CD14-positive monocyte (primary cell): ENCODE measurements at regions of chr6 and their contacts with region 1.

Region 1: GRCh38 chr6:24666641-24667377 is at the starts of genes ACOT13 and TDP2:
- DNase-seq: peak; percentile 96 to 99 (median 96)
- H3K4me3 ChIP-seq: peak within 1 kb of the TSS; percentile 79 to 99 (median 90)
- H3K4me3 Mint-ChIP-seq: peak within 1 kb of the TSS; percentile 96 to 98
- H3K27ac ChIP-seq: peak within 1 kb of the TSS; percentile 91 to 94
- H3K27ac Mint-ChIP-seq: peak within 1 kb of the TSS; percentile 94 to 99 (median 98)
- H3K4me1 ChIP-seq: peaks cover 21 to 29% of the 10 kb centered on the region in 2 donors
- H3K4me1 Mint-ChIP-seq: peaks cover 40% of the 10 kb centered on the region
- H3K27me3 ChIP-seq: no peaks in the 10 kb centered on the region
- H3K27me3 Mint-ChIP-seq: peaks cover 0 to 2% (median 0%) of the 10 kb centered on the region in 3 donors
- CTCF ChIP-seq: peak; percentile 65
- polyA plus RNA-seq, gene ACOT13: 1.7 to 20.1 (median 14.5) TPM
- polyA plus RNA-seq, gene TDP2: 21.0 to 24.2 (median 21.8) TPM

Region 2: DNA sequence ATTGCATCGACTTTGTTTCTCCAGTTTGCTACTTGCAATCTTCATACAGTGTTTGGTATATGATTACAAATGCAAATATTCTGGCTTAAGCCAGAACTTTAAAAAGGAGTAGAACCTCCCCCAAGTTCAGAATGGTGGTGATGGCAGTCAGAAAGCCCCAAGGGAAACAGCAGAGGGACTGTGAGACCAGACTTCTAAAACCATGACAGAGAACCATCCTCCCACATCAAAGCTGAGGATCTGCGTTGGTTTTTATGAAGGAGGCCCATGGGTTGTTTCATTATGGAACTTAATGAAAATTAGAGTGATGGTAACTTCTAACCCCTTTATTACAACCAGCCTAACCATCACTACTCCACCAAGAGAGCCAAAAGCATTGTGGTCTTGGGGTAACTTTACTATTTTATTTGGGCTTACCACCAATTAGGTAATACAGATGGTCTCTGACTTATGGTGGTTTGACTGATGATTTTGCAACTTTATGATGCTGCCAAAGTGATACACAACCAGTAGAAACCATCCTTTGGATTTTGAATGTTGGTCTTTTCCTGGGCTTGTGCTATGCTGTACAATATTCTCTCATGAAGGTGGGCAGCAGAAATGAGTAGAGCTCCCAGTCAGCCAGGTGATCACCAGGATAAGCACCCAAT is 274.9 kb before region 1 on chr6:
- intact Hi-C with region 1: no loop called
- DNase-seq: no peak
- H3K4me3 ChIP-seq: no peak overlapping the region
- H3K4me3 Mint-ChIP-seq: no peak overlapping the region
- H3K27ac ChIP-seq: no peak overlapping the region
- H3K27ac Mint-ChIP-seq: no peak overlapping the region
- H3K4me1 ChIP-seq: peaks cover 12% of the 10 kb centered on the region in 2 donors
- H3K4me1 Mint-ChIP-seq: peaks cover 12% of the 10 kb centered on the region
- H3K27me3 ChIP-seq: no peaks in the 10 kb centered on the region
- H3K27me3 Mint-ChIP-seq: peaks cover under 1 to 4% (median 2%) of the 10 kb centered on the region in 3 donors
- CTCF ChIP-seq: no peak

Region 3: DNA sequence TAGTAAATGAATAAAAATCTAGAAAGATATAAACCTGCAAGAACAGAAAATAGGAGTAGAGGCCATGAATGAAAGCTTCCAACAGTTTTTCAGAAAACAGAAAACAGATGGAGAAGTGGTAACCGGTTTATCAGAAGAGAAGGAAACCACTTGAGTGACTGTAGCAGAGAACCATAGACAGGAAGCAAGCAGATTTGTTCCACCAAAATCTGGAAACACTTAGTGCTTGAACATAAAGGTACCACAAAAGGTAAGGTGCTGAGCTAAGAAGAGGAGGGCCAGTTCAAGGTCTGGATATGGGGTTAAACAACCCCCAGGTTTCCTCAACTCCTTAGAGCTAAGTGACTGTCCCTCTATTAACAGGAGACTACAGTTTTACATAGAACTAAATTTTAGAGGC is 11.6 kb before region 1 on chr6:
- intact Hi-C with region 1: loop called in 1 of 2 experiments (anchors 1 kb)
- DNase-seq: no peak
- H3K4me3 ChIP-seq: no peak overlapping the region
- H3K4me3 Mint-ChIP-seq: no peak overlapping the region
- H3K27ac ChIP-seq: peak overlapping the region in 1 of 2 donors; percentile 44
- H3K27ac Mint-ChIP-seq: peak overlapping the region in 3 of 7 donors; percentile 13 to 28 (median 28)
- H3K4me1 ChIP-seq: peaks cover 18 to 23% of the 10 kb centered on the region in 2 donors
- H3K4me1 Mint-ChIP-seq: peaks cover 21% of the 10 kb centered on the region
- H3K27me3 ChIP-seq: no peaks in the 10 kb centered on the region
- H3K27me3 Mint-ChIP-seq: no peaks in the 10 kb centered on the region
- CTCF ChIP-seq: no peak

Region 4: DNA sequence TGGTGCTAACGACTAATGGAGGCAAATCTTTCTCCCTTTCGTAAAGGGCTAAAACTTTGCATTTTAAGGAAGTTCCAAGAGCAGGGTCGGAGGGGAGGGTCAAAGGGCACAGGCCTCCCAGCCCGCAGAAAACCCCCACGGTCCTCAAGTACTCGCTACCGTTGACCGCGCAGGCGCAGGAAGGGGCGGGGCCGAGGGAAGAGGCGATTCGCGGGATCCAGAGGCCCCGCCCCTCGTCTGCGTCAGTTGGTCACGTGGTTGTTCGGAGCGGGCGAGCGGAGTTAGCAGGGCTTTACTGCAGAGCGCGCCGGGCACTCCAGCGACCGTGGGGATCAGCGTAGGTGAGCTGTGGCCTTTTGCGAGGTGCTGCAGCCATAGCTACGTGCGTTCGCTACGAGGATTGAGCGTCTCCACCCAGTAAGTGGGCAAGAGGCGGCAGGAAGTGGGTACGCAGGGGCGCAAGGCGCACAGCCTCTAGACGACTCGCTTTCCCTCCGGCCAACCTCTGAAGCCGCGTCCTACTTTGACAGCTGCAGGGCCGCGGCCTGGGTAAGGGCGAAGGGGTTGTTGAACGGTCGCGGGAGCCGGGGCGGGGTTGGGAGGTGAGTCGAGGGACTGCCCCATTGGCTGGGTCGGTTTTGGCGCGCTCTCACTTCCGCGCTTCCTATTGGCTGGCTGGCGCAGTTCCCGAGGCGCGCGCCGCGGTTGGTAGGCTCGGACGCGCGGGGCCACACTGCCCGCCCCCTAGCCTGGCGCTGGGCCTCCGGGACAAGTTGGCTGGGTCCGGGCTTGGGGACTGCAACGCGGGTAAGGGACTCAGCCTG is 108.1 kb after region 1 on chr6 and contains the start of gene GMNN:
- intact Hi-C with region 1: loop called in 1 of 2 experiments (anchors 2 kb)
- DNase-seq: peak; percentile 95 to 98 (median 96)
- H3K4me3 ChIP-seq: peak within 1 kb of the TSS; percentile 78 to 100 (median 98)
- H3K4me3 Mint-ChIP-seq: peak within 1 kb of the TSS; percentile 98 to 100
- H3K27ac ChIP-seq: peak within 1 kb of the TSS; percentile 69 to 85
- H3K27ac Mint-ChIP-seq: peak within 1 kb of the TSS; percentile 87 to 98 (median 96)
- H3K4me1 ChIP-seq: peaks cover 18% of the 10 kb centered on the region in 2 donors
- H3K4me1 Mint-ChIP-seq: peaks cover 21% of the 10 kb centered on the region
- H3K27me3 ChIP-seq: no peaks in the 10 kb centered on the region
- H3K27me3 Mint-ChIP-seq: no peaks in the 10 kb centered on the region
- CTCF ChIP-seq: no peak
- polyA plus RNA-seq, gene GMNN: 2.6 to 5.2 (median 2.9) TPM